Activated T-helper 1 cell treated with anti-CD3 and anti-CD28 coated beads, Interleukin-12 subunit alpha, Interleukin-12 subunit beta, Interleukin-2, Interleukin-4 antibody, amounts not matched to agents 30 ng/mL and 10 ng/mL and 1 ng/mL, durations not matched to agents 14 hours and 24 hours and 36 hours (primary cell): ENCODE measurements at regions of chr14 and their contacts with region 1.

Region 1: GRCh38 chr14:24160850-24161804 is at the start of gene IRF9:
- DNase-seq: peak; percentile 98
- H3K4me3 Mint-ChIP-seq: peak within 1 kb of the TSS; percentile 99
- H3K27ac Mint-ChIP-seq: peak within 1 kb of the TSS; percentile 99
- H3K4me1 Mint-ChIP-seq: peaks cover 60% of the 10 kb centered on the region
- H3K27me3 Mint-ChIP-seq: peaks cover 4% of the 10 kb centered on the region
- total RNA-seq, gene IRF9: 130 and 152 TPM in 2 replicates

Region 2: DNA sequence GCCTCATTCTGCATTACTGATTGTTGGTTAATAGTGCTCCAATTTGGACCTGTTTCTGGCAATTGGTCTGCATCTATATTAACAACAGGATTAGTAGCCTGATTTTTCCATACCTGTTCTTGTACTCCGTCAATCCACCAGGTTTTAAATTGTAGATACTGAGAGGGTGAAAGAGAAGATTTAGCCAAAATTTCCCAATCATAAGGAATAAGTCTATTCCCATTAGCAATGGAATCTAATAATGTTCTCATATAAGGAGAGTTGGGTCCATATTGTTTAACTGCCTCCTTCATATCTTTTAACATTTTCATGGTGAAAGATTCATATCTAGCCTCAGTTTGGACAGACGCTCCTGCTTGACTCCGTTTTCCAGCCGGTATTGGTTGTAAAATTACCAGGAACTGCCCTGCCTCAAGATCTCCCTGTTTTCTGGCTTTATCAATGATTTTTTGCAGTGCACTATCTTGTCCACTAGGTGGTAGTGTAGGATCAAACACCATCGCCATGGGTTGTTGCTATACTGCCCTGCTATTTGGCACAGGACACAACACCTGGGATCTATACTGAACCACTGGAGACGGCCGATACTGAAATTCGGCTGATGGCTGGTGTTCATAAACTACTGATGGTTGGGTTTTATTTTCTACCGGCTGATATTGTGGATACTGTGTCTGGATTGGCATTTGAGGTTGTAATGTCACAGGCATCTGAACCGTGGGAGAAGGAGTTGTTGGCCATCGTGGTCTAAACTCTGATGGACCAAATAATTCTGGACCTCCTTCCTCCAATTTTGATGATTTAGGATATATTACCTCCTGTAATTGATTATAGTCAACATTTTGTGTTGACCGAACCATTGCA is 147.2 kb before region 1 on chr14:
- intact Hi-C with region 1: loop called (anchors 1 kb)
- DNase-seq: peak; percentile 57
- H3K4me3 Mint-ChIP-seq: no peak overlapping the region
- H3K27ac Mint-ChIP-seq: no peak overlapping the region
- H3K4me1 Mint-ChIP-seq: peaks cover 23% of the 10 kb centered on the region
- H3K27me3 Mint-ChIP-seq: peaks cover 7% of the 10 kb centered on the region

Region 3: DNA sequence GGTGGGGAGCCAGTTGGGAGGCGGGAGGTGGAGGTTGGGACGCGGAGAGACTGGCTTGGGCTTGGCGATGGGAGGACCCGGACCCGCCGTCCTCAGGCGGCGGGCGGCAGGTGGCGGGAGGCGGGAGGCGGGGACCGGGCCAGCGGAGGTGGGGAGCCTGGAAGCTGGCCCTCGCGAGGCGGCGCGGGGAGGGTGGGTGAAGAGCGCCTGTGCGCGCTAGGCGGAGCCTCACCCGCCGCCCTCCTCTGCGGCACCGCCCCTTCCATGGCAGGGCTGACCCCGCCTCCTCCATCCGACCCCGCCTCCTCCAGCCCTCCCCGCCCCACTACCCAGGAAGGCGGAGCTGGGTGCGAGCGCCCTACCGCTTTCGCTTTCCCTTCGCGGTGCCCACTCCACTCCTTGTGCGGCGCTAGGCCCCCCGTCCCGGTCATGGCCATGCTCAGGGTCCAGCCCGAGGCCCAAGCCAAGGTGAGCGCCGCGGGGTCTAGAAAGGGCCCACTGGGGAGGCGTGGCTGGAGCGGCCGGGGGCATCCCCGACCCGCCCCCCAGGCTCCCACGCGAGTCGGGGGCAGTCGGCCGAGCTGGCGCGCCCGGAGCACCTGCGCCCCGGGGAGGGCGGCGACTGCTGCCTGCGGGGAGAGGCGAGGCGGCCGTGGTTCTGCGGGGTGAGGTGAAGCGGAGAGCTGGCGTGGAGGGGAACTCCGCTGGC is 25.1 kb before region 1 on chr14 and contains the start of gene PSME1:
- intact Hi-C with region 1: loop called (anchors 1 kb)
- DNase-seq: peak; percentile 92
- H3K4me3 Mint-ChIP-seq: peak within 1 kb of the TSS; percentile 92
- H3K27ac Mint-ChIP-seq: peak within 1 kb of the TSS; percentile 90
- H3K4me1 Mint-ChIP-seq: peaks cover 64% of the 10 kb centered on the region
- H3K27me3 Mint-ChIP-seq: no peaks in the 10 kb centered on the region
- total RNA-seq, gene PSME1: 291 and 295 TPM in 2 replicates

Region 4: DNA sequence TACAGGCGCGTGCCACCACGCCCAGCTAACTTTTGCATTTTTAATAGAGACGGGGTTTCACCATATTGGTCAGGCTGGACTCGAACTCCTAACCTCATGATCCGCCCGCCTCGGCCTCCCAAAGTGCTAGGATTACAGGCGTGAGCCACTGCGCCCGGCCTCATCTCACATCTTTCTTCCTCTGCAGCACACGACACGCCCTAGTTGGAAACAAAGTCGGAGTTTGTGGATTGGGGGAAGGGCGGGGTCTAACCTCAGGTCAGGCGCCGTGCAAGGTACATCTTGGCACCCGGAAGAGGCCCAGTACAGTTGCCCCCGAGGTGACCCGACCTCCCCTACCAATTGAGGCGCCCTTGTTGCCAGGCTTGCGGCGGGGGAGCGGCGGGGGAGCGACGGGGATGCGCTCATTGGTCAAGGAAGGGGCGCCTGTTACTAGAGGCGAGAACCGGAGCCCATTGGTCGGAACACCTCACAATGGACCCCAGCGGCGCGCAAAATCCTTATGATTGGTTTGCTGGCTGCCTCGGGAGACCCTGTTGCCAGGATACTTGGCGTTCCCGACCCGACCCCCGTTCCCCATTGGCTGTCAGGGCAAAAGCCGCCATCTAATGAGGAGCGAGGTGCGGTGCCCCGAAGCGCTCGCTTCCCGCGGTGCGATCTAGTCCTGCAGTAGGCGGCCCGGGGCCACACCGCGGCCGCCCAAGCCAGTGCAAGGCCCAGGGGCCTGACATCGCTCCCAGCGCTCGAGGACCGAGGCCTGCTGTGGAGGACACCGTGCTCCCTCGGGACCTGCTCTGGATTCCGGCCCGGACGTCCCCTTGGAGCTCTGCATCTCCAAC is 10.5 kb after region 1 on chr14 and contains the start of gene REC8:
- intact Hi-C with region 1: loop called (anchors 1 kb)
- DNase-seq: no peak
- H3K4me3 Mint-ChIP-seq: peak within 1 kb of the TSS; percentile 65
- H3K27ac Mint-ChIP-seq: peak within 1 kb of the TSS; percentile 55
- H3K4me1 Mint-ChIP-seq: peaks cover 24% of the 10 kb centered on the region
- H3K27me3 Mint-ChIP-seq: no peaks in the 10 kb centered on the region
- total RNA-seq, gene REC8: 27.8 and 28.9 TPM in 2 replicates

Region 5: DNA sequence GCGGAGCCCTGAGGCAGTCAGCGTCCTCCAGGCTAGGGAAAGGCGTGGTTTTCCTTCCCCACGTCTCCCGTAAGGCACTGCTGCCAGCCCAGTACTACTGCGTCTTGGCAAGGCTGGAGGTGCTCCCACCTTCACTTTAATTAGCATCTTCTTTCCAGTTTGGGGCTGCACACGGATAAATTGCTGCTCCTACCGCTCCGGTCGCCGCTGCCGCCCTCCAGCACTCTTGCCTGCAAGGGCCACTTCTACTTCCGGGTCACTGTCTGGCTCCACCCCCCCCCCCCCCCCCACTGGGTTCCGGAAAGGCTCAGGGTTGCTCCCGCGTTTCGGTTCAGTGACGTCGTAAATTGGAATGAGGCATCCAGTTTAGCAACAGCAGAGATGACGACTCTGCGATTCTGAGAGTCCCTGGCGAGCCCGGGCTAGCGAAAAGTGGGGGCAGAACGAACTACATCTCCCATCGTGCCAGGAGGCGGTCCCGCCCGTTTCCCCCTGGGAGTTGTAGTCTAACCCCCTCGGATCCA is 71.1 kb after region 1 on chr14 and contains the start of gene NEDD8:
- intact Hi-C with region 1: loop called (anchors 1 kb)
- DNase-seq: peak; percentile 84
- H3K4me3 Mint-ChIP-seq: peak within 1 kb of the TSS; percentile 93
- H3K27ac Mint-ChIP-seq: peak within 1 kb of the TSS; percentile 91
- H3K4me1 Mint-ChIP-seq: peaks cover 50% of the 10 kb centered on the region
- H3K27me3 Mint-ChIP-seq: no peaks in the 10 kb centered on the region
- total RNA-seq, gene NEDD8: 177 and 185 TPM in 2 replicates

Region 6: DNA sequence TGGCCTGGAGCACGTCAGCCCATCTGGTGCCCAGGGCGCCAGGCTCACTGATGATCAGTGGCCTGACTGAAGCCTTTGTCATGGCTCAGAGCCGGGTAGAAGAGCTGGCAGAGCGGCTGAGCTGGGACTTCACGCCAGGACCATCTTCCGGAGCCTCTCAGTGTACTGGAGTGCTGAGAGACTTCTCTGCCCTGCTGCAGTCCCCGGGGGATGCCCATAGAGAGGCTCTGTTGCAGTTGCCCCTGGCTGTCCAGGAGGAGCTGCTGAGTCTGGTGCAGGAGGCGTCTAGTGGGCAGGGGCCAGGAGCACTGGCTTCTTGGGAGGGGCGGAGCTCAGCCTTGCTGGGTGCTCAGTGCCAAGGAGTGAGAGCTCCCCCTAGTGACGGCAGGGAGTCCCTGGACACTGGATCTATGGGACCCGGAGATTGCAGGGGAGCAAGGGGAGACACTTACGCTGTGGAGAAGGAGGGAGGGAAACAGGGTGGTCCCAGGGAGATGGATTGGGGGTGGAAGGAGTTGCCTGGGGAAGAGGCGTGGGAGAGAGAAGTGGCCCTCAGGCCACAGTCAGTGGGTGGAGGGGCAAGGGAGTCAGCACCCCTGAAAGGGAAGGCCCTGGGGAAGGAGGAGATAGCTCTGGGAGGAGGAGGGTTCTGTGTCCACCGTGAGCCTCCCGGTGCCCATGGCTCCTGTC is 270.6 kb after region 1 on chr14:
- intact Hi-C with region 1: loop called (anchors 5 kb)
- DNase-seq: peak; percentile 85
- H3K4me3 Mint-ChIP-seq: peak overlapping the region; percentile 90
- H3K27ac Mint-ChIP-seq: peak overlapping the region; percentile 95
- H3K4me1 Mint-ChIP-seq: peaks cover 51% of the 10 kb centered on the region
- H3K27me3 Mint-ChIP-seq: no peaks in the 10 kb centered on the region